ENCODE measurements at regions of chr10 and their contacts with region 1.

Region 1: DNA sequence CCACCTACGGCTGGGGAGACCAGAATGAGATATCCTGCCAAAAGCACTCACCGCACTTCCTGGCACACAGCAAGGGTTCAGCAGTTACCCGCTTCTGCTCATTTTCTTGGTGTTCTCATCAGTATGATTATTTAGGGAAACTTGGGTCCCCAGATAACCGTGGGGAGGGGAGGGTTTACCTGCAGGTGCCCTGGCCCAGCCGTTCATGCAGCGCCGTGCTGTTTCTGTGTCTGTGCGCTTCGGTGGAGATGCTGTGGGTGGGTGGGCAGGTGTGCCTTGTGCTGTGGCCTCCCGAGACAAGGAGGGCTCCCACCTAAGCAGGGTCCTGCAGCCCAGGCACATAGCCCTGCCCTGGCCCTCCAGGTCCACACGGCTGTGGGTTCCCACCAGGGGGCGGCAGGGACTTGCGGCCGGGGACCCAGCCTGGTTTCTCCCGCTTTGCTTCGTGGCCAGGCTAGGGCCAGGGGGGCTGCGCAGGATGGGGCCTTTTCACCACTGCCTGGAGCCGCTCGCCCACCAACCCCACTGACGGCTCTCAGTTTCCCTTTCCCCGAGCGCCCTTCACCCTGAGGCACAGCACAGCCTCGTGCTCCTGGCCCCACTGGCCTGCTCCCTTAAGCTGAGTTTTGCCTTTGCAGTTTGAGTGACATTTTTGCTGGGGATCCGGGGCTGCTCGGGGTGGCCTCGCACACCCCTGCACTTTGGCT is 78.5 kb downstream of the LHPP start:
- DNase-seq: peak; percentile 89
- ATAC-seq: peak; percentile 71
- H3K4me3 ChIP-seq: no peak overlapping the region
- H3K4me3 Mint-ChIP-seq: peak overlapping the region; percentile 65
- H3K27ac ChIP-seq: peak overlapping the region; percentile 76 to 94
- H3K27ac Mint-ChIP-seq: peak overlapping the region; percentile 95
- H3K4me1 ChIP-seq: peaks cover 88 to 99% of the 10 kb centered on the region in 2 donors
- H3K4me1 Mint-ChIP-seq: peaks cover 90% of the 10 kb centered on the region
- H3K27me3 ChIP-seq: no peaks in the 10 kb centered on the region
- H3K27me3 Mint-ChIP-seq: no peaks in the 10 kb centered on the region
- CTCF ChIP-seq: peak; percentile 69

Region 2: DNA sequence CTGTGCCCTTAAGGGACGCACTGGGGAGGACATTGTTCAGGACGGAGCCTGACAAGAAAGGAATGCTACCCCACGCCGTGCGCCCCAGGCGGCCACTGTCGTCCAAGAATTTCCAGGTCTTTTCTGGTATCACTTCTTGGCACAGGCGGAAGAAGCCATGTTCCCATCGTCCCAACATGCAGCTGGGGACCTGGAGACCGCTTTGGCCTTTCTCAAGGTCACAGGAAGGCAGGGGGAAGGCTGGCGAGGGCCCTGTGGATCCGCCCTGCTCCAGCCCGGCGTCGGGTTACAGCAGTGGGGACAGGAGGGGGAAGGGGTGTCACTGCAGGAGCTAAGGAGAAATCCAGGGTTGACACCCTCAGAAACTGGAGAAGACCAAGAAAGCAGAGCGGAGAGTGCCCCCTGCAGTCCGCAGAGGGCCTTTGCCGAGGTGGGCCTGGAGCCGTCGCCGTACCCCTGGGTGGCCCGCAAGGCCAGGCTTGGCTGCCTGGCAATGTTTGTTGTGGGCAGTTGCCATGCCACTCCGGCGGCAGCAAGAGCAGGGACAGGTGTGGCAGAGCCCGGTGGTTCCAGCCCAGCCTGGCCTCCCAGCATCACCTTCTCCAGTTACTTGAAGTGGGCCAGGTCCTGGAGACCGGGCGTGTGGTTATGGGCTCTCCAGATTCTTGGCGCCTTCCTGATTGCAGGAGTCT is 25.6 kb after region 1 on chr10:
- CTCF ChIA-PET with region 1: interaction called, 27 read pairs
- POLR2A ChIA-PET with region 1: interaction called, 6 read pairs
- intact Hi-C with region 1: loop called (anchors 2 kb)
- DNase-seq: peak; percentile 49
- ATAC-seq: peak; percentile 45
- H3K4me3 ChIP-seq: no peak overlapping the region
- H3K4me3 Mint-ChIP-seq: no peak overlapping the region
- H3K27ac ChIP-seq: no peak overlapping the region
- H3K27ac Mint-ChIP-seq: no peak overlapping the region
- H3K4me1 ChIP-seq: peaks cover 35 to 40% of the 10 kb centered on the region in 2 donors
- H3K4me1 Mint-ChIP-seq: peaks cover 51% of the 10 kb centered on the region
- H3K27me3 ChIP-seq: no peaks in the 10 kb centered on the region
- H3K27me3 Mint-ChIP-seq: no peaks in the 10 kb centered on the region
- CTCF ChIP-seq: no peak

Region 3: GRCh38 chr10:124588736-124589490 is 48.8 kb after region 1 on chr10:
- CTCF ChIA-PET with region 1: interaction called, 12 read pairs
- POLR2A ChIA-PET with region 1: interaction called, 9 read pairs
- intact Hi-C with region 1: no loop called
- DNase-seq: no peak
- ATAC-seq: peak; percentile 18
- H3K4me3 ChIP-seq: no peak overlapping the region
- H3K4me3 Mint-ChIP-seq: peak overlapping the region; percentile 45
- H3K27ac ChIP-seq: no peak overlapping the region
- H3K27ac Mint-ChIP-seq: peak overlapping the region; percentile 50
- H3K4me1 ChIP-seq: peaks cover 44 to 48% of the 10 kb centered on the region in 2 donors
- H3K4me1 Mint-ChIP-seq: peaks cover 58% of the 10 kb centered on the region
- H3K27me3 ChIP-seq: no peaks in the 10 kb centered on the region
- H3K27me3 Mint-ChIP-seq: no peaks in the 10 kb centered on the region
- CTCF ChIP-seq: no peak

Region 4: GRCh38 chr10:124619195-124619594 is 79.1 kb after region 1 on chr10:
- CTCF ChIA-PET with region 1: interaction called, 100 read pairs
- POLR2A ChIA-PET with region 1: interaction called, 18 read pairs
- intact Hi-C with region 1: loop called (anchors 2 kb)
- DNase-seq: peak; percentile 84
- ATAC-seq: peak; percentile 75
- H3K4me3 ChIP-seq: peak overlapping the region in 4 of 5 experiments; percentile 19 to 55 (median 28)
- H3K4me3 Mint-ChIP-seq: peak overlapping the region; percentile 87
- H3K27ac ChIP-seq: peak overlapping the region; percentile 97 to 98
- H3K27ac Mint-ChIP-seq: peak overlapping the region; percentile 99
- H3K4me1 ChIP-seq: peaks cover 96 to 100% of the 10 kb centered on the region in 2 donors
- H3K4me1 Mint-ChIP-seq: peaks cover 93% of the 10 kb centered on the region
- H3K27me3 ChIP-seq: no peaks in the 10 kb centered on the region
- H3K27me3 Mint-ChIP-seq: no peaks in the 10 kb centered on the region
- CTCF ChIP-seq: no peak

Region 5: GRCh38 chr10:124626759-124627380 is 86.8 kb after region 1 on chr10:
- CTCF ChIA-PET with region 1: interaction called, 100 read pairs
- POLR2A ChIA-PET with region 1: interaction called, 4 read pairs
- intact Hi-C with region 1: no loop called
- DNase-seq: peak; percentile 82
- ATAC-seq: peak; percentile 81
- H3K4me3 ChIP-seq: peak overlapping the region in 1 of 5 experiments; percentile 30
- H3K4me3 Mint-ChIP-seq: peak overlapping the region; percentile 62
- H3K27ac ChIP-seq: peak overlapping the region; percentile 83 to 97
- H3K27ac Mint-ChIP-seq: peak overlapping the region; percentile 99
- H3K4me1 ChIP-seq: peaks cover 100% of the 10 kb centered on the region in 2 donors
- H3K4me1 Mint-ChIP-seq: peaks cover 94% of the 10 kb centered on the region
- H3K27me3 ChIP-seq: no peaks in the 10 kb centered on the region
- H3K27me3 Mint-ChIP-seq: no peaks in the 10 kb centered on the region
- CTCF ChIP-seq: peak; percentile 16

Region 6: DNA sequence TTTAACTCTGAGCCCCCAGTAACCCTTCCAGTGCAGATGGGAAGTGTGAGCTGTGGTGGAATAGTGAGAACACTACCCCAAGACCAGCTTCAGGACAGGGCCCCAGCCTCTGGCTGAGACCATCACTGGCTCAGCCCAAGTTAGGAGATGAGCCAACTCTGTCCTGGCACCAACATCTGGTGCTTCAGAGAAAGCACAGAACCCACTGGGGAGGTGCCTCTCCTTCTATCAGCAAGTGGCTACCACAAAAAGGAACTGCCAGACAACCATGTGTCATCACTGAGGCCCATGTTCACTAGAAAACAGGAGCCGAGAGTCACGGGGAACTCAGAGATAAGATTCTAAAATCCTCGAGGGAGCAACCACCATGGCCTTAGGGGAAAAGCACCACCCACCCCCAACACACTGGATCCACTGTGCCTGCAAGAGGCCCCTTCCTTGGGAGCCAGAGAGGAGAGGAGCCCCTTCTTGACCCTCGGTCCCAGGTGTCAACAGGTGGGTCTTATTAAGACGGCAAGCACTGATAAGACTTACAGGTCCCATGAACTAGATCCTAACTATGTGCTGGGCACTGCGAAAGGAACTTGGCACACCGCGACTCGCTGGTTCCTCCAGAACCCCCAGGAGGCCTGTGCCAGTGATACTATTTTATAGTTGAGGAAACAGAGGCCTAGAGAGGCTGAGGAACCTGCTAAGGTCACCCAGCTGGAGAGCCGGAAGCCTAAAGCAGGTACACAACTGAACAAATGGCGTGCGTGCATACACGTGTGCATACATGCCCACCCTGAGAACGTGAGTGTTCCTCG is 101.4 kb after region 1 on chr10:
- CTCF ChIA-PET with region 1: interaction called, 24 read pairs
- POLR2A ChIA-PET with region 1: interaction called, 4 read pairs
- intact Hi-C with region 1: loop called (anchors 1 kb)
- DNase-seq: peak; percentile 81
- ATAC-seq: peak; percentile 76
- H3K4me3 ChIP-seq: peak overlapping the region in 4 of 5 experiments; percentile 18 to 37 (median 20)
- H3K4me3 Mint-ChIP-seq: peak overlapping the region; percentile 83
- H3K27ac ChIP-seq: peak overlapping the region; percentile 86 to 92
- H3K27ac Mint-ChIP-seq: peak overlapping the region; percentile 94
- H3K4me1 ChIP-seq: peaks cover 99 to 100% of the 10 kb centered on the region in 2 donors
- H3K4me1 Mint-ChIP-seq: peaks cover 99% of the 10 kb centered on the region
- H3K27me3 ChIP-seq: no peaks in the 10 kb centered on the region
- H3K27me3 Mint-ChIP-seq: no peaks in the 10 kb centered on the region
- CTCF ChIP-seq: no peak